ENCODE measurements at regions of chr9 and their contacts with region 1.

Region 1: DNA sequence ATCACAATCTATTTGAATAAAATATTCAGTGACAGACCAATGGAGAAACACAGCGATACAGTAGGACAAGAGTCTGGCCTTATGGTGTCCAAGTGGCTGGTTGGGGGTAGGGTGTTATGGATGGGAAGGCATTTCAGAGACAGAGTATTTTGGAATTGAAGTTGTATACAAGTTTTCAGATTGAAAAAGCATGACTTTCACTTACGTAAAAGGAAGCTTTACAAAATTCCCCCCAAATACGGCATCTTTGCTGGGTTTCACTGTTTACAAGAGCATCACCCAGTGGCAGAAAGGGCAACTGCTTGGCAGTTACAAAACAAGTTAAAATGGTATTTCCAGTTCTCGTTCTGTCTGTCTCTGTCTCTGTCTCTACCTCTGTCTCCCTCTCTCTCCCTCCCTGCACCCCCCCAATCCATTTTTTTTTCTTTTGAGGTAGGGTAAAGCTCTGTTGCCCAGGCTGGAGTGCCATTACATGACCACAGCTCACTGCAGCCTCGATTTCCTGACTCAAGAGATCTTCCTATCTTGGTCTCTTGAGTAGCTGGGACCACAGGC is 86.2 kb downstream of the PTPN3 start:
- DNase-seq: peak; percentile 57 to 81 (median 77)
- H3K4me3 ChIP-seq: no peak overlapping the region
- H3K27ac ChIP-seq: no peak overlapping the region
- H3K4me1 ChIP-seq: no peaks in the 10 kb centered on the region
- H3K27me3 ChIP-seq: peaks cover 2 to 78% (median 37%) of the 10 kb centered on the region in 5 experiments

Region 2: DNA sequence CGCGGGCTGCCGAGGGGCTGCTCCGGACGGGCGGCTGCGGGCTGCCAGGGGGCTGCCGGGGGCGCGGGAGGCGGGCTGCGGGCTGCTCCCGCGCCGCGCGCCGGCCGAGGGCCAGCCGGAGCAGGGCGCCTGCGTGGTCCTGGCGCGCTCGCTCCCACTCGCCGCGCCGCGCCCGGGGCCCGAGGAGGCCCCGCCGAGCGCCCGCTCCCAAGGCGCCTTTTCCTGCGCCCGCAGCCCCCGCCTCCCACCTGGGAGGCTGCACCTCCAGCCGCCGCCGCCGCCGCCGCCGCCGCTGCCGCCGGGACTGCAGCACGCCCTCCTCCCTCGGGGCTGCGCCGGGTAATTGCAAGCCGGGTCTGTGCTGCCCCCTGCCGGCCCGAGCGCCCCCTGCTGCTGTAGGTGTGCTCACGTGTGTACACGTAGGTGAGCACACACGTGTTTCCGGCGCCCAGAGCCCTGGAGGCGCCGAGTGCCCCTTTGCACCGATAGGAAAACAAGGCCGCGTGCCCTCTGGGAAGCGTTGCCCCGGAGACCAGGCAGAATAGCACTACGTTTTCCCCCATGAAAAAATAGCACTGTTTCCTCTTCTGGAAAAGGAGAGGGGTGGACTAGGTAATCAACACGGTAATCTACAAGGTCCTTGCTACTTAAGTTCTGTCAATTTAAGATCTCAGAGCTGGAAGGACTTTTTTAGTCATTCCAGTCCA is 91.0 kb before region 1 on chr9 and contains the start of gene EPB41L4B:
- CTCF ChIA-PET with region 1: no interaction called
- POLR2A ChIA-PET with region 1: no interaction called
- DNase-seq: peak; percentile 84 to 88 (median 84)
- H3K4me3 ChIP-seq: peak within 1 kb of the TSS in 5 of 7 experiments; percentile 28 to 54 (median 37)
- H3K27ac ChIP-seq: no peak within 1 kb of the TSS
- H3K4me1 ChIP-seq: peaks cover 0 to 15% (median 5%) of the 10 kb centered on the region in 4 experiments
- H3K27me3 ChIP-seq: peaks cover 16 to 86% (median 28%) of the 10 kb centered on the region in 5 experiments

Region 3: GRCh38 chr9:109401168-109401989 is 10.5 kb before region 1 on chr9:
- CTCF ChIA-PET with region 1: interaction called, 27 read pairs
- POLR2A ChIA-PET with region 1: no interaction called
- DNase-seq: peak; percentile 36 to 57 (median 55)
- H3K4me3 ChIP-seq: no peak overlapping the region
- H3K27ac ChIP-seq: no peak overlapping the region
- H3K4me1 ChIP-seq: no peaks in the 10 kb centered on the region
- H3K27me3 ChIP-seq: peaks cover 2 to 92% (median 19%) of the 10 kb centered on the region in 5 experiments